ENCODE measurements at regions of chr22 and their contacts with region 1.

Region 1: DNA sequence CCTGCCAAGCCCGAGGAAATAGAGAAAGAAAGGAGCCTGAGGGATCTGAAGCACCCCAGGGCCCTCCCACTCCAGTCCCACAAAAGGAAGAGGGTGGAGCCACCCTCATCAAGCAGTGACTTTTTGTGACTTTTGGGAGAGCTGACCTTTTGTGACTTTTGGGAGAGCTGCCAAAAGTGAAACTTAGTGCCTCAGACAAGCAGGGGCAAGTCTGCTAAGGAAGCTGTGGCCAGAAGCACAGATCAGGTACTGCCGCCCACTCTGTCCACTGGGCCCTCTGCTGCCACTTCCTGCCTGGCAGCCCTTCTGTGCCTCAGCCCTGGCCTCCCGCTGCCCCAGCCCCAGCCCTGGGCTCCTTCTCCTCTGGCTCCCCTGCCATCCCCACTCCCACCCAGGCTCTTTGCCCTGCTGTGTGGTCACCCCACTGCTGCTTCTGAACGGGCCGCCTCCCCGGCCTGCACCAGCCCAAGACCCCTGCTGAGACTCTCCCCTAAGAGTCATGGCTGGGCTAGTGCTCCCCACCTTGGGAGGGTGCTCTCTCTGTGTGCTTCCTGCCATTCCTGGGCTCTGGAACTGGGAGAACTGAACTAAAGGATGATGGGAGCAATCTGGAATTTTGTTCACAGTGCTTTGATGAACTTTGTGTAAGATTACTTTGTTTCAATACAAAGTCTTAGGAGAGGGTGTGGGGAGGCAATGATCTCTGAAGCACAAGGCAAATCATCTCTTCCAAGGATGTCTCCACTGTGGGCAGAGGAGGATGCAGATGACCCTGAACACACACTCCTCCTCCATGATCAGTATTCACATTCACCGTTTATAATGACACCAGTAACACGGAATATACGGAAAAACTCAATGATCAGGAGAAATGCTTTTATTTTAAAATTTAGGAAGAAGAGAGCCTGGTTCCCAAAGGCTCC is at the start of gene APOBEC3H:
- DNase-seq: no peak
- ATAC-seq: peak; percentile 48
- H3K4me3 ChIP-seq: peak within 1 kb of the TSS; percentile 60
- H3K27ac ChIP-seq: peak within 1 kb of the TSS; percentile 98
- H3K4me1 ChIP-seq: peaks cover 60% of the 10 kb centered on the region
- H3K27me3 ChIP-seq: no peaks in the 10 kb centered on the region
- CTCF ChIP-seq: no peak
- EP300 ChIP-seq: no peak
- POLR2A ChIP-seq: peak; percentile 52; the same call in 1 of the 2 replicates
- RAD21 ChIP-seq: no peak
- polyA plus RNA-seq, gene APOBEC3H: 20.3 to 23.0 TPM

Region 2: DNA sequence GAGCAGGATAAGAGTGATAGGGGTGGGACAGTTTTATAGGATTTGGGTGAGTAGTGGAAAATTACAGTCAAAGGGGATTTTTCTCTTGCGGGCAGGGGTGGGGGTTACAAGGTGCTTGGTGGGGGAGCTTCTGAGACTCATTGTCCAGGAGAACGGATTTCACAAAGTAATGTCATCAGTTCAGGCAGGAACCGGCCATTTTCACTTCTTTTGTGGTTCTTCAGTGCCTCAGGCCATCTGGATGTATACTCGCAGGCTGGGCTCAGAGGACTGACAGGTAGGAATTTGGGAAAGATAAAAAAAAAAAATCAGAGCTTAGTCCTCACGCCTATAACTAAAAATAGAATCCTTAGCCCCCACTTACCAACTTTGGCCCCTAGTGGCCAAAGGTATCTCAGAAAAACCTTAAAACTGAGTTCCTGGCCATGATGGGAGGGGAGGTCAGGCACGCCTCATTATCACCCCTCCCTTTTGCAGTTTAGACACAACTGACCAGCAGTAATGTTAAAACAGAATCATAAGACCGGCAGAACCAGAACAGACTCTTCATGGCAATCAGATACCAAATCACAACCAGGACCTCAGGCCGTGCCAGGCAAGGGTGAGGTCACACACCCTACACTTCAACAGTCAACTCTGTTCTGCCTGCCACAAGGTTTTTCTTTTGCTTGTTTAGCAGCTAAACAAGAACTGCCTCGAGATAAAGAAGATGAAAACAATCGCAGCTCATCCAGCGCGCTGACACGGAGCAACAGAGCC is 29.1 kb before region 1 on chr22:
- CTCF ChIA-PET with region 1: interaction called, 13 read pairs
- POLR2A ChIA-PET with region 1: interaction called, 49 read pairs
- RAD21 ChIA-PET with region 1: interaction called, 30 read pairs
- SMC1A ChIA-PET with region 1: interaction called, 30 read pairs
- in situ Hi-C with region 1: no loop called
- intact Hi-C with region 1: loop called (anchors 2 kb)
- DNase-seq: no peak
- ATAC-seq: peak; percentile 16
- H3K4me3 ChIP-seq: peak overlapping the region; percentile 63
- H3K27ac ChIP-seq: peak overlapping the region; percentile 92
- H3K4me1 ChIP-seq: peaks cover 57% of the 10 kb centered on the region
- H3K27me3 ChIP-seq: no peaks in the 10 kb centered on the region
- CTCF ChIP-seq: peak; percentile 17 to 43 (median 37); a peak in 3 of 6 replicates
- EP300 ChIP-seq: no peak
- POLR2A ChIP-seq: no peak
- RAD21 ChIP-seq: no peak

Region 3: DNA sequence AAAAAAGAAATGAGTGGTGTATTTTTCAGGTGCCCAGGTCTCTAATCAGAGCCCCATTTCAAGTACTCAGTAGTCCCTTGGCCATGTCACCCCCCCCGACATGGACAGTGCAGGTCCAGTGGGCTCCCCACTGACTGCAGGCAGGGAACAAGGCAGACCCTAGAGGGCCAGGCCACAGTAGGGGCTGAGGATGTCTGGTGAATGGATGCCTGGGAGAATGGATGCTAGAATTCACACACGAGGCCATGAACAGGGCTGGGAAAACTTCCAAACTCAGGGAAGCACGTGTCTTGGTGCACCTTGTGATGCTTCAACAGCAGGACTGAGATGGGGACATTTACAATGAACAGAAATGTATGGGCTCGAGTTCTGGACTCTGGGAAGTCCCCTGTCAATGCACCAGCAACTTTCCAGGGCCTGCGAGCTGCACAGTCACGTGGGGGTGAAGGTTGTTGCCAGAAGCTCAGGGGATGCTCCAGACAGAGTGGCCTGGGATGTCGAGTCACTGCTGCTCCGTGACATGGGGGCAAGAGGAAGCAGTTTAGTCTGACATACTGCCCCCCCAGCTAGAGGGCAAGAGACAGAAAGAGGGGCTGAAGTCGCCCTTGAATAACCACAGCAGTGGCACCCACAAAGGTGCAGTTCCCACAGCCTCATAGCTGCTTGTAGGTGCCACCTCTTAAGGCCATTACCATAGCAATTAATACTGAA is 17.2 kb before region 1 on chr22:
- CTCF ChIA-PET with region 1: interaction called, 15 read pairs
- POLR2A ChIA-PET with region 1: interaction called, 44 read pairs
- RAD21 ChIA-PET with region 1: interaction called, 57 read pairs
- SMC1A ChIA-PET with region 1: interaction called, 44 read pairs
- in situ Hi-C with region 1: no loop called
- intact Hi-C with region 1: loop called (anchors 2 kb)
- DNase-seq: no peak
- ATAC-seq: peak; percentile 51
- H3K4me3 ChIP-seq: peak overlapping the region; percentile 43; the same call in 1 of the 2 replicates
- H3K27ac ChIP-seq: peak overlapping the region; percentile 41
- H3K4me1 ChIP-seq: peaks cover 30% of the 10 kb centered on the region
- H3K27me3 ChIP-seq: no peaks in the 10 kb centered on the region
- CTCF ChIP-seq: no peak
- EP300 ChIP-seq: no peak
- POLR2A ChIP-seq: no peak; the same call in none of the 2 replicates
- RAD21 ChIP-seq: no peak

Region 4: GRCh38 chr22:39117585-39118191 is 20.3 kb after region 1 on chr22:
- CTCF ChIA-PET with region 1: interaction called, 39 read pairs
- POLR2A ChIA-PET with region 1: interaction called, 76 read pairs
- RAD21 ChIA-PET with region 1: interaction called, 85 read pairs
- SMC1A ChIA-PET with region 1: interaction called, 126 read pairs
- in situ Hi-C with region 1: no loop called
- intact Hi-C with region 1: loop called (anchors 1 kb)
- DNase-seq: peak; percentile 81
- ATAC-seq: peak; percentile 75
- H3K4me3 ChIP-seq: no peak overlapping the region
- H3K27ac ChIP-seq: peak overlapping the region; percentile 96
- H3K4me1 ChIP-seq: peaks cover 49% of the 10 kb centered on the region
- H3K27me3 ChIP-seq: no peaks in the 10 kb centered on the region
- CTCF ChIP-seq: peak; percentile 56 to 75 (median 64)
- EP300 ChIP-seq: peak; percentile 82 to 95
- POLR2A ChIP-seq: no peak
- RAD21 ChIP-seq: peak; percentile 86